ENCODE measurements at regions of chr22 and their contacts with region 1.

Region 1: DNA sequence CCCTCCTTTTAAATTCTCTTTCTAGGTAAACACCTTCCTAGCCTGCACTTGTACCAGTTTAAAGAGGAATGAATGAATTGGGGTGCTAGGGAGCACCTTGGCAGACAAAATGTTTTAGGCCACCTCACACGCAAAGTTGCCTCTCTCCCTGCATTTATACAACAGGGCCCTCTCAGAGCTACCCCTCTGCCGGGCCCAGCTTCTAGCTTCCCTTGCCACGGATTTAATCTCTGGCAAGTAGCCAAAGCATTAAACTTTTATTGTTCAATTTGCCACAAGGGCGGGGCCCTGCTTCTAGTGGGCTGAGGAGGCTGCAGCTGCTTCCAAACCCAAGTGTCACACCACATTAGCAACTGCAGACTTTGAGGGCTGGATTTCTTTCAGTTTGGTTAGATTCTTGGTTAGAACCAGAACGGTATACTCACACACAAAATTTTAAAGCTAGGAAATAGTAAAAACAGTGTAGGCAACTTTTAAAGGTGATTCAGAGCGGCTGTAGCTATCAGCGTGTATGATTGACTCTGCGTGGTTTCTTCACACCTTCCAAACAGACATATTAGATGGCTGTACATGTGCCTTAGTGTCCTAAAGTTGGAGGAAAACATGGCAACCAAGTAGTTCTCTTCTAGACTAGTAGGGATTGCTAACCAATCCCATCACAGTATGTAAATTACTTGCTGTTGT is 6.5 kb downstream of the KREMEN1 start:
- DNase-seq: no peak
- ATAC-seq: no peak
- H3K4me3 ChIP-seq: no peak overlapping the region
- H3K27ac ChIP-seq: no peak overlapping the region
- H3K4me1 ChIP-seq: 0 out of 2 replicates have a peak, but pooled peaks cover 3% of the 10 kb centered on the region
- H3K27me3 ChIP-seq: peaks cover 0 to 4% of the 10 kb centered on the region in 2 experiments; a peak in 2 of 4 replicates
- CTCF ChIP-seq: no peak
- EP300 ChIP-seq: no peak
- POLR2A ChIP-seq: no peak
- RAD21 ChIP-seq: no peak

Region 2: DNA sequence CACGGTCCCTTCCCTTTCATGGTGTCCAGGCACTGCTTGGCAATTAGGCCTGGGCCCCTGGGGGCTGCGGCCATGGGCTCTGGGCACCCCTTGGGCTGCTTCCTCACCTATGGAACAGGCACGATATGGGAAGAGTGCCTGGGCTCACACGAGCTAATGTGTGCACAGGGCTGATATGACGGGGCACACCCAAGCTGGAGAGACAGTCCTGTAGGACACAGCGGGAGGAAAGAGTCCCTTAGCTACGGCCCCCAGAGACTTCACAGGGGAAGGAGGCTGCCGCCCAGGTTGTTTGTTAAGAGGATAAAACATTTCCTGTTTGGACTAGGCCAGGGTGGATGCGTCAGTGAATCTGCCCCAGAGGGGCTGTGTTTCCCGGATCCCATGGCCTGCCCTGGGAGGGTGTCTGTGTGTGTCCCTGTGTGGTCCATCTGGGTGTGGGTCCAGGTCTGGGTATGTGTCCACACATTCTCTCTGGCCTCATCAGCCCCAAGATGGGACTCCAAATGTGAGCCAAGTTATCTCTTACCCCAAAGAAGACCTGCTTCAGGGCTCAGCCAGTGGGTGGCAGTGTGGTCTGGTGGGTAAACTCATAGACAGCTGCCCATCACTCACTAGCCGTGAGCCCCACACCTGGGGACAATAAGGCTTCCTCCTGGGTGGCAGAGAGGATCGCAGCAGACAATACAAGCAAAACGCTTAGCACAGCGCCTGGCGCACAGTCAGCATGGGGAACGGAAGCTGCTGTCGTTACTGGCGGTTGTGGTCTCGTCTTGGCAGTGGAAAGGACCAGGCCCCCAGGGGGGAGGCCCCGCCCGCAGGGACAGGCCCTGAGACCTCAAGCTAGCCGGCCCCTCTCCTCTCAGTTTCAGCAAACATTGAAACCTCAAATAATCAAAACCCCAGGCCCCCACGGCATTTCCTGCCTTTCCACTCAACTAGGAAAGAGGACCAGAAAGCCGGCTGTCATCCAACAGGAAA is 123.1 kb after region 1 on chr22:
- CTCF ChIA-PET with region 1: interaction called, 3 read pairs
- POLR2A ChIA-PET with region 1: no interaction called
- RAD21 ChIA-PET with region 1: interaction called, 3 read pairs
- SMC1A ChIA-PET with region 1: interaction called, 7 read pairs
- in situ Hi-C with region 1: no loop called
- intact Hi-C with region 1: loop called (anchors 5 kb)
- DNase-seq: peak; percentile 91
- ATAC-seq: peak; percentile 77
- H3K4me3 ChIP-seq: peak overlapping the region; percentile 15; the same call in 1 of the 2 replicates
- H3K27ac ChIP-seq: peak overlapping the region; percentile 90
- H3K4me1 ChIP-seq: peaks cover 45% of the 10 kb centered on the region
- H3K27me3 ChIP-seq: no peaks in the 10 kb centered on the region; a peak in 1 of 4 replicates
- CTCF ChIP-seq: peak; percentile 41 to 43 (median 42); a peak in 4 of 6 replicates
- EP300 ChIP-seq: peak; percentile 76 to 94
- POLR2A ChIP-seq: peak; percentile 79
- RAD21 ChIP-seq: peak; percentile 15; the same call in 1 of the 2 replicates

Measured in GM12878 (cell line).